ENCODE measurements at regions of chr9 and their contacts with region 1.

Region 1: GRCh38 chr9:88378317-88378716 is 9.9 kb upstream of the SPIN1 start:
- DNase-seq: no peak
- ATAC-seq: no peak
- H3K4me3 ChIP-seq: no peak overlapping the region
- H3K4me3 Mint-ChIP-seq: no peak overlapping the region
- H3K27ac ChIP-seq: no peak overlapping the region
- H3K27ac Mint-ChIP-seq: no peak overlapping the region
- H3K4me1 ChIP-seq: no peaks in the 10 kb centered on the region
- H3K4me1 Mint-ChIP-seq: peaks cover 0 to 2% (median 0%) of the 10 kb centered on the region in 7 donors
- H3K27me3 ChIP-seq: no peaks in the 10 kb centered on the region
- H3K27me3 Mint-ChIP-seq: peaks cover 0 to 13% (median 0%) of the 10 kb centered on the region in 5 donors

Region 2: GRCh38 chr9:90044710-90045151 is 1666.4 kb after region 1 on chr9:
- CTCF ChIA-PET with region 1: no interaction called
- POLR2A ChIA-PET with region 1: no interaction called
- intact Hi-C with region 1: loop called in 1 of 2 experiments (anchors 10 kb)
- DNase-seq: no peak
- ATAC-seq: no peak
- H3K4me3 ChIP-seq: no peak overlapping the region
- H3K4me3 Mint-ChIP-seq: no peak overlapping the region
- H3K27ac ChIP-seq: no peak overlapping the region
- H3K27ac Mint-ChIP-seq: peak overlapping the region in 1 of 9 donors; percentile 10
- H3K4me1 ChIP-seq: no peaks in the 10 kb centered on the region
- H3K4me1 Mint-ChIP-seq: peaks cover 0 to 17% (median 0%) of the 10 kb centered on the region in 7 donors
- H3K27me3 ChIP-seq: no peaks in the 10 kb centered on the region
- H3K27me3 Mint-ChIP-seq: peaks cover 0 to 7% (median 3%) of the 10 kb centered on the region in 5 donors

Measured in naive thymus-derived CD4-positive, alpha-beta T cell (primary cell).